ENCODE measurements at regions of chrX and their contacts with region 1.

Region 1: GRCh38 chrX:10083809-10084208 is 73.0 kb upstream of the CLCN4 start:
- DNase-seq: no peak
- H3K4me3 Mint-ChIP-seq: no peak overlapping the region
- H3K27ac Mint-ChIP-seq: peak overlapping the region; percentile 60
- H3K4me1 Mint-ChIP-seq: peaks cover 34% of the 10 kb centered on the region
- H3K27me3 Mint-ChIP-seq: no peaks in the 10 kb centered on the region

Region 2: DNA sequence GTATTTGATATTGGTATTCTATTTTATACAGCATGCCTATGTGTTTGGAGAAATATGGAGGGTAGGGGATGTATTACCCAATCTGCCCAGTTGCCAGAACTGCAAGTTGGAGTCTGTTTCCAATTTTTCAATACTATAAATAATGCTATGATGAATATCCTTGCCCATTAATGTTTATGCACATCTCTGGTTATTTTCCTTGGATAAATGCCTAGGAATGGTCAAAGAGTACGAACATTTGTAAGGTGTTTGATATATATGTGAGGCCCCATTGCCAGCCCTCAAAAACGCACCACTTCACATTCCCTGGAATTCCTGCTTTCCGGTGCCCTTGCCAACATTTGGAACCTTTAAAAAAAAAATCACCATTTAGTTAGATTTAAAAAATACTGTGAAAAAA is 82.3 kb before region 1 on chrX:
- intact Hi-C with region 1: loop called (anchors 2 kb)
- DNase-seq: no peak
- H3K4me3 Mint-ChIP-seq: no peak overlapping the region
- H3K27ac Mint-ChIP-seq: no peak overlapping the region
- H3K4me1 Mint-ChIP-seq: peaks cover 35% of the 10 kb centered on the region
- H3K27me3 Mint-ChIP-seq: no peaks in the 10 kb centered on the region

Region 3: DNA sequence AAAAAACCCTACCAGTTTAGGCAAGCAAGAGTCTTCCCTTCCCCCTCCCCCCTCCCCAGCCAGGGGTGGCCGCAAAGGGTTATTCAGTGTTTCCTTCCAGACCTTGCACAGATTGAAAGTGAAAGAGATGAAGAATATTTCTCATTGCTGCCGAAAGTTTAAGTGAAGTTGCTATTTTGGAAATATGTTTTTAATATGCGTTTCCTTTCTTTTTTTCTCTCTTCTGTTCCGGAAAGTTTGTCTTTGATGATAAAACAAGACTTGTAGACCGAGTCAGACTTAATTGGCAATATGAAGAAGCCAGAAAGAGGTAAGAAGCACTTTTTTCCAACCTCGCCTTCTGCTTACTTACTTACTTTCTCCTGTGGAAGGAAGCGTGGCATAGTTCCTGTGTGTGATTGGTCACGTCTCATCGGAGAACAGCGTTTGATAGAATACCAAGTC is 14.5 kb after region 1 on chrX:
- intact Hi-C with region 1: loop called (anchors 1 kb)
- DNase-seq: peak; percentile 60
- H3K4me3 Mint-ChIP-seq: peak overlapping the region; percentile 76
- H3K27ac Mint-ChIP-seq: peak overlapping the region; percentile 91
- H3K4me1 Mint-ChIP-seq: peaks cover 31% of the 10 kb centered on the region
- H3K27me3 Mint-ChIP-seq: no peaks in the 10 kb centered on the region

Region 4: DNA sequence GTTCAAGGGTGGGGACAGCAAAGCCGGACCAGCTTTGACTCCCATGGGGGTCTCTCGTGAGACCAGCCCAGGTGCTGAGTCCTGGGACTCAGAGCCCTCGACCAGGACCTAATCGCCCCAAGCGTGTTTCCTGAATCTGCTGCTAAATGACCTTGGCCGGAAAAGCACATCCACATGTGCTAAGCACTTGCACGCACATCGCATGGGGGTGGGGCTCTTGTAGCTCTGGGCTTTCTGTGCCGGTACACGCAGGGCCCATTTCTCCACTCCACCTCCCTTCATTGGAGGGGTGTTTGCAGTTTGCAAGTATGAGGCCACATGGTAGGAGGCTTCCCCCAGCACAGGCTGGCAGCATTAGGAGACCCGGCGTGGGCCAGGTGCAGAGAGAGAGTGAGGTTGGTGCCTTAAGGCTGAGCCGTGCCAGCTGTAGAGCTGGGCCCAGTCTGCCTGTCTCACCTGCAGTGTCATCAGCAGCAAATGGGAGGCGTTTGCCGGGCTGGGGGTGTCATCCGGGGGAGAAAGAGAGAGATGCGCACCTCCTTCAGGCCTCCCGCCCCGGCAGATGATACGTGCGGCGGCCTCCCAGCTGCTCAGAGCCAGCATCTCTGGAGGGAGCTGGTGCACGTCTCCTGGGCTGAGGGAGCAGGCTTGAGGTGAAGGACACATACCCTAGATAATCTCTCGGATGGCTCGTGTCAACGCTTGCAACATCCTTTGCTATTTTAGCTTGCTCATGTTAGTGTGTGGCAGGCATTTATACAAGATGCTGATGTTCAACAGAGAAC is 27.7 kb after region 1 on chrX:
- intact Hi-C with region 1: loop called (anchors 1 kb)
- DNase-seq: peak; percentile 19
- H3K4me3 Mint-ChIP-seq: peak overlapping the region; percentile 72
- H3K27ac Mint-ChIP-seq: peak overlapping the region; percentile 97
- H3K4me1 Mint-ChIP-seq: peaks cover 42% of the 10 kb centered on the region
- H3K27me3 Mint-ChIP-seq: no peaks in the 10 kb centered on the region

Region 5: GRCh38 chrX:10280071-10280470 is 196.3 kb after region 1 on chrX:
- intact Hi-C with region 1: no loop called
- DNase-seq: no peak
- H3K4me3 Mint-ChIP-seq: no peak overlapping the region
- H3K27ac Mint-ChIP-seq: no peak overlapping the region
- H3K4me1 Mint-ChIP-seq: no peaks in the 10 kb centered on the region
- H3K27me3 Mint-ChIP-seq: no peaks in the 10 kb centered on the region